Esophagus muscularis mucosa (tissue), 4 donors: ENCODE measurements at regions of chr20 and their contacts with region 1.

Region 1: GRCh38 chr20:13546497-13547131 is 92.1 kb downstream of the TASP1 start:
- DNase-seq: peak; percentile 94
- H3K4me3 ChIP-seq: no peak overlapping the region
- H3K27ac ChIP-seq: no peak overlapping the region
- H3K4me1 ChIP-seq: peaks cover 0 to 8% (median 3%) of the 10 kb centered on the region in 4 donors
- H3K27me3 ChIP-seq: no peaks in the 10 kb centered on the region
- CTCF ChIP-seq: peak; percentile 79 to 87 (median 82)
- EP300 ChIP-seq: no peak
- POLR2A ChIP-seq: no peak

Region 2: DNA sequence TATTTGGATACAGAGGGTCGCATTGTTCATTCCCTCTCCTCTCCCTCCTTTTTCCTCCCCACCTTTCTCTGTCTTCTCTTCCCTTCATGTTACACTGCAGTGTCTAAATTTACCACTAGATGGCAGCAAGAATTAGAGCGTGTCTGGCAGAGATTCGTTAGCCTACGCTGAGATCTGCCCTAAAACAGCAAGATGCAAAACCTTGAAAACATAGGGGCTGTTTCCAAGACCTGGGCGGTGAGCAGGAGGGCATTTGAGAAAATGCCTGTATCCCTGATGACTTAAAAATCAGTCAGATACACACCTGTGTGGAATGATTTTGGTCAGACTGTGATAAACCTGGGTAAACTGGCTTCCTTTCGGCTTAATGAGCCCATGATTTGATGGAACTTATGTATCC is 427.0 kb before region 1 on chr20:
- intact Hi-C with region 1: loop called (anchors 5 kb)
- DNase-seq: no peak
- H3K4me3 ChIP-seq: no peak overlapping the region
- H3K27ac ChIP-seq: no peak overlapping the region
- H3K4me1 ChIP-seq: no peaks in the 10 kb centered on the region
- H3K27me3 ChIP-seq: no peaks in the 10 kb centered on the region
- CTCF ChIP-seq: peak; percentile 80 to 89 (median 83)
- EP300 ChIP-seq: no peak
- POLR2A ChIP-seq: no peak

Region 3: DNA sequence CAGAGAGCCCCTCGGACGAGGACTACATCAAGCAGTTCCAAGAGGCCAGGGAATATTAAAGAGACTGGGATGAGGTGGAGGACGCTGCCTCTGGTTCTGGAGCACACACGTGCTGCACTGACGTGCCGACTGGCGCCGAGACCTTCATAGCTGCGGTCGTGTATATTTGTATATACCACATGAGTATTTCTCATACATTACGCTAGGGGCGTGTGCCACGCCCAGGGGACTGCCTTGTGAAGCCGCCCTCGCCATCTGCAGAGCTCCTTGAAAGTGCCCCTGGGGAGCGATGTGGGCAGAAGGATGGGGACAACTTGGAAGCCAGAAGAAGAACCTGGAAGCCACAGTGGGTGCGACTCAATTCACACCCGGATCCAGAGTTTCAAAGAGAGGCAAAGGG is 247.2 kb before region 1 on chr20:
- intact Hi-C with region 1: no loop called
- DNase-seq: no peak
- H3K4me3 ChIP-seq: no peak overlapping the region
- H3K27ac ChIP-seq: no peak overlapping the region
- H3K4me1 ChIP-seq: no peaks in the 10 kb centered on the region
- H3K27me3 ChIP-seq: no peaks in the 10 kb centered on the region
- CTCF ChIP-seq: no peak
- EP300 ChIP-seq: no peak
- POLR2A ChIP-seq: no peak

Region 4: GRCh38 chr20:13325033-13325432 is 221.6 kb before region 1 on chr20:
- intact Hi-C with region 1: loop called (anchors 2 kb)
- DNase-seq: no peak
- H3K4me3 ChIP-seq: no peak overlapping the region
- H3K27ac ChIP-seq: no peak overlapping the region
- H3K4me1 ChIP-seq: no peaks in the 10 kb centered on the region
- H3K27me3 ChIP-seq: no peaks in the 10 kb centered on the region
- CTCF ChIP-seq: peak; percentile 37 to 63 (median 50)
- EP300 ChIP-seq: no peak
- POLR2A ChIP-seq: no peak

Region 5: GRCh38 chr20:13458860-13459451 is 87.7 kb before region 1 on chr20:
- intact Hi-C with region 1: loop called (anchors 10 kb)
- DNase-seq: no peak
- H3K4me3 ChIP-seq: no peak overlapping the region
- H3K27ac ChIP-seq: no peak overlapping the region
- H3K4me1 ChIP-seq: no peaks in the 10 kb centered on the region
- H3K27me3 ChIP-seq: no peaks in the 10 kb centered on the region
- CTCF ChIP-seq: peak; percentile 53 to 77 (median 64)
- EP300 ChIP-seq: no peak
- POLR2A ChIP-seq: no peak